HCT116 (cell line): ENCODE measurements at regions of chr2 and their contacts with region 1.

Region 1: GRCh38 chr2:157375384-157375783 is 49.8 kb upstream of the ERMN start:
- DNase-seq: no peak
- ATAC-seq: no peak
- H3K4me3 ChIP-seq: no peak overlapping the region
- H3K27ac ChIP-seq: no peak overlapping the region
- H3K4me1 ChIP-seq: no peaks in the 10 kb centered on the region
- H3K27me3 ChIP-seq: no peaks in the 10 kb centered on the region
- CTCF ChIP-seq: no peak
- POLR2A ChIP-seq: no peak
- RAD21 ChIP-seq: no peak

Region 2: GRCh38 chr2:155802888-155803287 is 1572.5 kb before region 1 on chr2:
- CTCF ChIA-PET with region 1: no interaction called
- POLR2A ChIA-PET with region 1: no interaction called
- RAD21 ChIA-PET with region 1: no interaction called
- intact Hi-C with region 1: loop called (anchors 5 kb)
- DNase-seq: no peak
- ATAC-seq: no peak
- H3K4me3 ChIP-seq: no peak overlapping the region
- H3K27ac ChIP-seq: no peak overlapping the region
- H3K4me1 ChIP-seq: no peaks in the 10 kb centered on the region
- H3K27me3 ChIP-seq: no peaks in the 10 kb centered on the region
- CTCF ChIP-seq: no peak
- POLR2A ChIP-seq: no peak
- RAD21 ChIP-seq: no peak

Region 3: DNA sequence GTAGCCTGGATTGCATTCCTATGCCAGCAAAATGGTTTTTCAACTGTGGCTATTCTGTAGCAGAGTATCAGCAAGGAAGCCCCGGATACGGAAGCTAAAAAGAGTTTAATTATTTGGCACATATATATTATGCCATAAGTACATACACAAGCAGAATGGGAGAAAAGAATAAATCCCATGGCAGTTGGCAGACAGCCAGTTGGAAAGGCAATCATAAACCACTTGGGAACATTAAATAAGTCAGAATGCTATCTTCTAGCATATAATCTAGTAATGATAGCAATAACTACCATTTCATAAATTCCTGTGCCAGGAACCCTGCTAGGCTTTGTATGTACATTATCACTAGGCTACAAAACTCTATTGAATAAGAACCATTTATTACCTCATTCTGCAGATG is 91.9 kb before region 1 on chr2:
- CTCF ChIA-PET with region 1: no interaction called
- POLR2A ChIA-PET with region 1: no interaction called
- RAD21 ChIA-PET with region 1: no interaction called
- intact Hi-C with region 1: no loop called
- DNase-seq: no peak
- ATAC-seq: no peak
- H3K4me3 ChIP-seq: no peak overlapping the region
- H3K27ac ChIP-seq: no peak overlapping the region
- H3K4me1 ChIP-seq: no peaks in the 10 kb centered on the region
- H3K27me3 ChIP-seq: no peaks in the 10 kb centered on the region
- CTCF ChIP-seq: no peak
- POLR2A ChIP-seq: no peak
- RAD21 ChIP-seq: no peak

Region 4: GRCh38 chr2:157460384-157460837 is 85.0 kb after region 1 on chr2:
- CTCF ChIA-PET with region 1: no interaction called
- POLR2A ChIA-PET with region 1: no interaction called
- RAD21 ChIA-PET with region 1: no interaction called
- intact Hi-C with region 1: no loop called
- DNase-seq: no peak
- ATAC-seq: no peak
- H3K4me3 ChIP-seq: no peak overlapping the region
- H3K27ac ChIP-seq: no peak overlapping the region
- H3K4me1 ChIP-seq: no peaks in the 10 kb centered on the region
- H3K27me3 ChIP-seq: no peaks in the 10 kb centered on the region
- CTCF ChIP-seq: no peak
- POLR2A ChIP-seq: no peak
- RAD21 ChIP-seq: no peak

Region 5: DNA sequence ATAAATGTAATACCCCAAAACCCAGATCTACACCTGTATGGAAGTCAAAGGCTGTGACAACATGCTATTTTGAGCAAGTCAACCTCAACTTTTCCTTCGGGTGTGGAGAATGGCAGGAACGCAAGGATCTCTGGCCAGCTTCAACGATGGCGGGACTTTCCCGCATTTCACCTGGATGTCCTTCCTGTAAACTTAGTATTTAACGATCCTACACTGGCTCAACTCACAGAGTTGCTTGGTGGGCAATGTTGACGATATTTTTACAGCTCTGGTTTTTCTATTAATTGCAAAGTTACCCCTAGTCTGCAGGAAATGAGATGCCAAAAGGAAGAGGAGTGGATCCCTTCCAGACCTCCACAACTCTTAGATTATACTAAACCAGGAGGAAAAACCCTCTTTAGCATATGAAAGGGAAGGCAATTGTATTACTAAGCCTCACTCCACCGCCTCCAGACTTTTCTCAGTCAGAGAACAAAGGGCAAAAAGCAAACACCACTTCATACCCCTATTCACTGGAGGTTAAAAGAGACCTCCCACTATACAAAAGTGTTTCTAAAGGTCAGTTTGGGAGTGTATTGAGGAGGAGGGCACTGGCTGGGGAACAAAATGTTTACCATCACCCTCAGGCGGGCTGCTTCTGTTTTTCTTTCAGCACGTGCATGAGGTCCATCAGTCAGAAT is 557.2 kb after region 1 on chr2:
- CTCF ChIA-PET with region 1: no interaction called
- POLR2A ChIA-PET with region 1: no interaction called
- RAD21 ChIA-PET with region 1: no interaction called
- intact Hi-C with region 1: no loop called
- DNase-seq: no peak
- ATAC-seq: no peak
- H3K4me3 ChIP-seq: no peak overlapping the region
- H3K27ac ChIP-seq: no peak overlapping the region
- H3K4me1 ChIP-seq: no peaks in the 10 kb centered on the region
- H3K27me3 ChIP-seq: no peaks in the 10 kb centered on the region
- CTCF ChIP-seq: no peak
- POLR2A ChIP-seq: no peak
- RAD21 ChIP-seq: no peak